ENCODE measurements at regions of chr9 and their contacts with region 1.

Region 1: GRCh38 chr9:5696884-5697283 is 68.0 kb downstream of the RIC1 start:
- DNase-seq: no peak
- ATAC-seq: no peak

Region 2: GRCh38 chr9:5629312-5630080 is 67.4 kb before region 1 on chr9:
- intact Hi-C with region 1: loop called (anchors 10 kb)
- DNase-seq: peak; percentile 75
- ATAC-seq: peak; percentile 27

Measured in Right ventricle myocardium superior (tissue), 1 donor.